ENCODE measurements at regions of chr19 and their contacts with region 1.

Region 1: DNA sequence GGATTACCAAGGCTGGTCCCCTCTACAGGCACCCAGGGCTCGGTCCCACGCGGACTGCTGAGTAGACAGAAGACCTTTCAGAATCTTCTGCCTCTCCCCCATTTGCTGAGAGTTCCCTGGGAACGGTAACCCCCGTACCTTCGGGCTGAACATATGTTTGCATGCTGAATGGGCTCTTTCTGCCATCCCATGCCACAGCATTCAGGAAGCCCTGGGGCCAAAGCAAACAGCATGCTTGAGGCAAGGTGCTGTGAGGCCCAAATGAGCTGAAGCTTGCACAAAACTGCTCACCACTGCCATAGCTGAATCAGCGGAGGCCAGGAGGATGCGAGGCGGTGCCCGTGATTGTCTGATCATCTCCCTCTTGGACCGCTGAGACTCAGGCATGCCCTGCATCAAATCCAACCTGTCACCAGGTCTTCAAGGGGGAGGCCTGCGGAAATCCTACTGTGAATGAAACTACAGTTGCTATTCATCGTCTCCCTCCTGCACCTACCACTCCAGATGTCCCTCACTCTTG is 16.3 kb upstream of the C19orf12 start:
- DNase-seq: no peak
- ATAC-seq: no peak
- H3K4me3 Mint-ChIP-seq: no peak overlapping the region
- H3K27ac Mint-ChIP-seq: no peak overlapping the region
- H3K4me1 Mint-ChIP-seq: no peaks in the 10 kb centered on the region
- H3K27me3 Mint-ChIP-seq: peaks cover 2% of the 10 kb centered on the region
- CTCF ChIP-seq: no peak

Region 2: GRCh38 chr19:29741786-29742185 is 10.4 kb after region 1 on chr19:
- CTCF ChIA-PET with region 1: interaction called, 20 read pairs
- POLR2A ChIA-PET with region 1: no interaction called
- intact Hi-C with region 1: no loop called
- DNase-seq: no peak
- ATAC-seq: no peak
- H3K4me3 Mint-ChIP-seq: no peak overlapping the region
- H3K27ac Mint-ChIP-seq: no peak overlapping the region
- H3K4me1 Mint-ChIP-seq: no peaks in the 10 kb centered on the region
- H3K27me3 Mint-ChIP-seq: no peaks in the 10 kb centered on the region
- CTCF ChIP-seq: no peak

Region 3: GRCh38 chr19:29771708-29772414 is 40.5 kb after region 1 on chr19:
- CTCF ChIA-PET with region 1: interaction called, 13 read pairs
- POLR2A ChIA-PET with region 1: no interaction called
- intact Hi-C with region 1: no loop called
- DNase-seq: peak; percentile 34
- ATAC-seq: no peak
- H3K4me3 Mint-ChIP-seq: no peak overlapping the region
- H3K27ac Mint-ChIP-seq: no peak overlapping the region
- H3K4me1 Mint-ChIP-seq: no peaks in the 10 kb centered on the region
- H3K27me3 Mint-ChIP-seq: peaks cover 2% of the 10 kb centered on the region
- CTCF ChIP-seq: peak; percentile 47

Region 4: GRCh38 chr19:29796173-29796573 is 64.8 kb after region 1 on chr19:
- CTCF ChIA-PET with region 1: no interaction called
- POLR2A ChIA-PET with region 1: no interaction called
- intact Hi-C with region 1: no loop called
- DNase-seq: no peak
- ATAC-seq: no peak
- H3K4me3 Mint-ChIP-seq: no peak overlapping the region
- H3K27ac Mint-ChIP-seq: no peak overlapping the region
- H3K4me1 Mint-ChIP-seq: peaks cover 5% of the 10 kb centered on the region
- H3K27me3 Mint-ChIP-seq: no peaks in the 10 kb centered on the region
- CTCF ChIP-seq: no peak